ENCODE measurements at regions of chr17 and their contacts with region 1.

Region 1: GRCh38 chr17:9644910-9645751 is at the start of gene USP43:
- DNase-seq: peak; percentile 35
- H3K4me3 Mint-ChIP-seq: peak within 1 kb of the TSS; percentile 75
- H3K27ac Mint-ChIP-seq: no peak within 1 kb of the TSS
- H3K4me1 Mint-ChIP-seq: peaks cover 7% of the 10 kb centered on the region
- H3K27me3 Mint-ChIP-seq: peaks cover 53% of the 10 kb centered on the region
- total RNA-seq, gene USP43: 0.34 to 0.50 TPM

Region 2: DNA sequence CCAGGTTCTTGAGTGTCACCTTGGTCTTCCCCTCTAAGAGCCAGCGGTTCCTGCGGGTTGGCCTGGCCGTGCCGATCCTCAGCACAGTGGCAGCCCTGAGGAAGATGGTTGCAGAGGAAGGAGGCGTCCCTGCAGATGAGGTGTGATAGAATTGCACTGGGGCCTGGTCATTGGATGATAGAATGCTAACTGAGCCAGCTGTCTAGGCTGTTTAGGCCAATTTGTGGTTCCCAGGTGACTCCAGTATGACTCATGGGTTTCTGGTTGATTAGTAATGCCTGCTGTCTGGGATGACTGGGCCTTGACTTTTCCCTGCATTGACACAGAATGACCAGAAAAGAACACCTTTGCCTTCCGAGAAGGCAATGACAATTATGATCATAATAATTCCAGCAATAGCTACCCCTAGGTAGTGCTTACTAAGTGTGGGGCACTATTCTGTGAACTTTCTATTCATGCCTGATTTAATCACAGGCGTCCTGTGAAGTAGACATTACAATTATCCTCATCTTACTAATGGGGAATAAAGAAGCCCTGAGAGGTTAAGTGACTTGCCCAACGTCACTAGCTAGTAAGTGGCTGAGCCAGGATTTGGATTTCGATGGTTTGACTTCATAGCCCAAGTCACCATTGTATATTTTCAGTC is 31.7 kb after region 1 on chr17:
- CTCF ChIA-PET with region 1: interaction called, 3 read pairs
- POLR2A ChIA-PET with region 1: no interaction called
- intact Hi-C with region 1: loop called (anchors 2 kb)
- DNase-seq: peak; percentile 56
- H3K4me3 Mint-ChIP-seq: no peak overlapping the region
- H3K27ac Mint-ChIP-seq: peak overlapping the region; percentile 71
- H3K4me1 Mint-ChIP-seq: peaks cover 15% of the 10 kb centered on the region
- H3K27me3 Mint-ChIP-seq: peaks cover 7% of the 10 kb centered on the region